MCF 10A (cell line): ENCODE measurements at regions of chr1 and their contacts with region 1.

Region 1: GRCh38 chr1:94599095-94599813 is 57.7 kb upstream of the F3 start:
- DNase-seq: peak; percentile 75
- H3K4me3 Mint-ChIP-seq: no peak overlapping the region
- H3K27ac Mint-ChIP-seq: no peak overlapping the region
- H3K4me1 Mint-ChIP-seq: peaks cover 43% of the 10 kb centered on the region
- H3K27me3 Mint-ChIP-seq: no peaks in the 10 kb centered on the region
- CTCF ChIP-seq: peak; percentile 43

Region 2: GRCh38 chr1:94514095-94514727 is 85.0 kb before region 1 on chr1:
- CTCF ChIA-PET with region 1: interaction called, 15 read pairs
- POLR2A ChIA-PET with region 1: no interaction called
- intact Hi-C with region 1: no loop called
- DNase-seq: peak; percentile 53
- H3K4me3 Mint-ChIP-seq: no peak overlapping the region
- H3K27ac Mint-ChIP-seq: no peak overlapping the region
- H3K4me1 Mint-ChIP-seq: no peaks in the 10 kb centered on the region
- H3K27me3 Mint-ChIP-seq: no peaks in the 10 kb centered on the region
- CTCF ChIP-seq: peak; percentile 63

Region 3: GRCh38 chr1:94527447-94528031 is 71.7 kb before region 1 on chr1:
- CTCF ChIA-PET with region 1: interaction called, 20 read pairs
- POLR2A ChIA-PET with region 1: interaction called, 4 read pairs
- intact Hi-C with region 1: no loop called
- DNase-seq: peak; percentile 64
- H3K4me3 Mint-ChIP-seq: no peak overlapping the region
- H3K27ac Mint-ChIP-seq: no peak overlapping the region
- H3K4me1 Mint-ChIP-seq: peaks cover 25% of the 10 kb centered on the region
- H3K27me3 Mint-ChIP-seq: no peaks in the 10 kb centered on the region
- CTCF ChIP-seq: no peak

Region 4: DNA sequence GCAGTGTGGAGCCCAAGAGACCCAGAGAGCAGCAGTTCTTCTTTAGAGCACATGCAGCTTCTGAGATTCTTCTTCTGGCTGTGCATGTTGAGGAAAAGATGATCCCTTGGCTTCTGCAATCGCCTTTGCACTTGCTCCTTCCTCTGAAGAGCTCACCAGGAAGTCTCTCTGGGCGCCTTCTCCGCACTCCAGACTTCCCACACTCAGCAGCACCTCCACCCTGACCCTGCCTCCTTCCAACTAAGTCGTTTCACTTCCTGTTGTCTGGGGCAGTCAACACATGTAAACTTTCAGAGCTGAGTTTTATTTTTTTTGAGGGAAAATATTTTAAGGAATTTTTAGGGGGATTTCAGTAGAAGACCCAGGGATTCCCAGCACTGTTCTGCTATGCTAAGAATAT is 15.7 kb after region 1 on chr1:
- CTCF ChIA-PET with region 1: interaction called, 17 read pairs
- POLR2A ChIA-PET with region 1: interaction called, 5 read pairs
- intact Hi-C with region 1: no loop called
- DNase-seq: no peak
- H3K4me3 Mint-ChIP-seq: no peak overlapping the region
- H3K27ac Mint-ChIP-seq: no peak overlapping the region
- H3K4me1 Mint-ChIP-seq: peaks cover 20% of the 10 kb centered on the region
- H3K27me3 Mint-ChIP-seq: no peaks in the 10 kb centered on the region
- CTCF ChIP-seq: no peak

Region 5: GRCh38 chr1:94734963-94735899 is 136.0 kb after region 1 on chr1:
- CTCF ChIA-PET with region 1: interaction called, 3 read pairs
- POLR2A ChIA-PET with region 1: interaction called, 3 read pairs
- intact Hi-C with region 1: loop called (anchors 5 kb)
- DNase-seq: peak; percentile 95
- H3K4me3 Mint-ChIP-seq: peak overlapping the region; percentile 18
- H3K27ac Mint-ChIP-seq: peak overlapping the region; percentile 93
- H3K4me1 Mint-ChIP-seq: peaks cover 60% of the 10 kb centered on the region
- H3K27me3 Mint-ChIP-seq: no peaks in the 10 kb centered on the region
- CTCF ChIP-seq: no peak